Panc1 (cell line): ENCODE measurements at regions of chr6 and their contacts with region 1.

Region 1: DNA sequence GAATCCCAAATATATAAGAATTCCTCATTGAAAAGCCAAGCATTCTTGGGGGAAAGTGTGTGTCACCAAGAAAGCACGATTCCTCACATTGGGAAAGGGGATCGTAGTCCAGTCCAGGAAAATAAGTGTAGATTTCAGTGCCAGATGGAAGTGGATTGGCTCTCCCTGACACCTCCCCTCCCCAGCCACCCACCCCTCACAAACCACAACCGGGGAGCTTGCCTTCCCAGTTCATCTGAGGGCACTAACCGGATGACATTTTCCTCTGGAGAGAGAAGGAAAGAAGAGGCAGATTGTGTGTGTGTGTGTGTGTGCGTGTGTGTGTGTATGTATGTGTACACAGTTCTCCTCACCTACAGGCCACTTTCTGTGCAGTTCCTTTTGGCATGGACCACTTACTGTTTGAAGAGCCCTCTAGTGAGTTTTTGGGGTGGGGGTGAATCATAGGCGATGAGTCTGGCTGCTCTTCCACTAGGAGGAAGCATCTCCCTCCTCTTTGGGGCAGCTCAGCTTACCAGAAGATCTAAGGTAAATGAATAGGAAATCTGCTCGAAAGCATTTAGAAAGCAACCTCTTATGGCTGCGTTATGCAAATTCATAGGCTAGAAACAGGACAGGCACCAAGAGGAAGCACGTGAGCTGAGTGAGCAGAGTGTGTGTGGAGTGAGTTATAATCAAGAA is 20.8 kb downstream of the DAAM2 start:
- DNase-seq: no peak
- ATAC-seq: no peak
- H3K4me3 ChIP-seq: no peak overlapping the region
- H3K27ac ChIP-seq: no peak overlapping the region
- H3K4me1 ChIP-seq: no peaks in the 10 kb centered on the region
- H3K27me3 ChIP-seq: no peaks in the 10 kb centered on the region
- CTCF ChIP-seq: no peak

Region 2: DNA sequence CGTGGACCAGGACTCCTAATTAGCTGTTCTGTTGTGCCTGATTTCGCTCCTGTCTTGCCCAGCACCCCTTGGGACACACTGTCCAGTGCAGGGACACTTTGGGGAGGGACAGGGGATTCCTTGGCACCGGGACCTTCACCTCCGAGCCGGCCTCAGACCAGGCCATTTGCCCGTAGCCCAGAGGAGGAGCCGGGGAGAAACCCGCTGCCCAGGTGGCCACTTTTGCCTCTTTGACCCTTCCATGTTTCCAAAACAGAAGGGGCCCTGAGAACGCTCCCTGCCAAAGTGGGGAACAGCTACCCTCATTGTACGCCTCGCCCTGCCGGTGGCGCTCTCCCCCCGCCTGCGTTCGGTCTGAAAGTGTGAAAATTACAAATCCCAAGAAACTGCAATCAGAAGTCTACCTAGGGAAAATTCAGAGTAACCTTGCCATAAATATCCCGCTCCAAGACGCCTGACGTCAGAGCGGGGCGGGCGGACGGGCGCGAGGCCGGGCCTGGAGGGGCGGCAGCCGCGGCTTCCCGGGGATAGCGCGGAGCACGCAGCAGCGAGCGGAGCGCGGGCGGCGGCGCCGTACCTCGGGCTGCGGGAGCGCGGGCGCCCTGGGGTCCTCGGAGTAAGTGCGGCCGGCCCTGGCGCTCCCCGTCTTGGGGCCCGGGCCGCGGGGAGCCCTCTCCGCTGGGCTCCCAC is 21.0 kb before region 1 on chr6 and contains the start of gene DAAM2:
- CTCF ChIA-PET with region 1: interaction called, 3 read pairs
- POLR2A ChIA-PET with region 1: interaction called, 15 read pairs
- in situ Hi-C with region 1: no loop called
- intact Hi-C with region 1: no loop called
- DNase-seq: no peak
- ATAC-seq: peak; percentile 72
- H3K4me3 ChIP-seq: peak within 1 kb of the TSS; percentile 20 to 30; a peak in 3 of 4 replicates
- H3K27ac ChIP-seq: no peak within 1 kb of the TSS
- H3K4me1 ChIP-seq: no peaks in the 10 kb centered on the region; the same call in 1 of the 2 replicates
- H3K27me3 ChIP-seq: peaks cover 19% of the 10 kb centered on the region; the same call in 1 of the 2 replicates
- CTCF ChIP-seq: no peak
- total RNA-seq, gene DAAM2: not detected